ENCODE measurements at regions of chr10 and their contacts with region 1.

Region 1: DNA sequence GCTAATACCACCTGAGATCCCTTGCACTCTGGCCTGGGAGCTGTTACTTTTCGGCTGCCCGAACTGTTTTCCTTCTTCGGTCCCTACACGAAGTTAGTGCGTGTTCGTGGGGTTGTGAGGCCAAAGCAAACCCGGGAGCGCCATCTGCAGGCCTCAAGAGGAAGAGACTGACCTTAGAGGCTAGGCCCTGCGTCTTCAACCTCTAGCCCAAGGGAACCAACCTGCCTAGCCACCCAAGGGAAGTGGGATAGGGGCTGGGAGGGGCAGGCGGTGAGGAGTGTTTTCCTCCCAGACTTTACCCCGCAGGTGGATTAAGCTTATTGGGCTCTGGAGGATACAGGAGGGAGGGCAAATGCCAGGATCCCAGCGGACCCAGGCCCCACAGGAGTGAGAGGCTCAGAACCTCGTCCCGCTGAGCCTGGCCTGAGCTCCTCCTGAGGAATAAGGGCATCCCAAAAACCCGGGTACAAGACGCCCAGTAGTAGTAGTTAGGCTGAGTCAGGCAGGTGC is 1.7 kb upstream of the PAX2 start:
- DNase-seq: peak; percentile 17 to 63 (median 24)
- H3K4me3 ChIP-seq: no peak overlapping the region
- H3K4me3 Mint-ChIP-seq: peak overlapping the region in 1 of 2 donors; percentile 81
- H3K27ac ChIP-seq: no peak overlapping the region
- H3K27ac Mint-ChIP-seq: no peak overlapping the region
- H3K4me1 ChIP-seq: no peaks in the 10 kb centered on the region
- H3K4me1 Mint-ChIP-seq: peaks cover 7% of the 10 kb centered on the region
- H3K27me3 ChIP-seq: peaks cover 79 to 93% of the 10 kb centered on the region in 2 donors
- H3K27me3 Mint-ChIP-seq: peaks cover 90 to 99% (median 94%) of the 10 kb centered on the region in 3 donors
- CTCF ChIP-seq: peak; percentile 67

Region 2: DNA sequence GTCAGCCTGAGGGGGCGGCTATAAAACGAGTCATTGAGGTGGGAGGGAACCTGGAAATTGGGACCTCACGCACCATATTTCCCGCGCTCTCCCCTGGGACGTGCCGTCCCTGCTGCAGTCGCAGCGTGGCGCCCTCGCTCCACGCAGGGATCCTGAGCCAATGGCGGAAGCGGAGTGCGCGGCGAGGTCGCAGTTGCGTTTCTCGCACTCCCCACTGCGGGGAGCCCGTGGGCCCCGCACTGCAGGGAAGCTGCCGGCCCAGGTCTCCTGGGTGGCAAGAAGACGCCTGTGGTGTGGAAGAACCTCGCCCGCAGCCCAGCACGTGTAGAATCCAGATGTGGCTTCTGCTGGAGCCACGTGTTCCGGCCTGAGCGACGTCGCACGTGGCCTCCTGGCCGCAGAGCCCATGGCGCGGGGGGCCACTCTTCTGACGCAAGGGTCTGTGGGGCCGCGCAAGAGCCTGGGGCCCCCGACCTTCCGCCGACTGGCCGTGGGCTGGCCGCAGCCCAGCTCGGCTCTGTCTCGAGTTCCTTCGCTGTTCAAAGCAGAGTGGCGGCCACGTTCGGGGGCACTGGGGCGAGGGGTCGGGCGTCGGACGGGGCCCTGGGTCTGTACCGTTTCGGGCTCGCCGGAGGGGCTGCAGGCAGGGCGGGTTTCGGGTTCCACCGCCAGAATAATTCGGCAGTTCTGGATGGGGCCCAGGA is 181.5 kb before region 1 on chr10:
- intact Hi-C with region 1: loop called (anchors 2 to 10 kb)
- DNase-seq: peak; percentile 60 to 77 (median 64)
- H3K4me3 ChIP-seq: peak overlapping the region in 1 of 3 experiments; percentile 13
- H3K4me3 Mint-ChIP-seq: peak overlapping the region; percentile 17 to 79
- H3K27ac ChIP-seq: no peak overlapping the region
- H3K27ac Mint-ChIP-seq: no peak overlapping the region
- H3K4me1 ChIP-seq: peaks cover 12 to 16% of the 10 kb centered on the region in 2 donors
- H3K4me1 Mint-ChIP-seq: peaks cover 18% of the 10 kb centered on the region
- H3K27me3 ChIP-seq: peaks cover 12 to 48% of the 10 kb centered on the region in 2 donors
- H3K27me3 Mint-ChIP-seq: peaks cover 51 to 64% (median 59%) of the 10 kb centered on the region in 3 donors
- CTCF ChIP-seq: peak; percentile 83

Region 3: DNA sequence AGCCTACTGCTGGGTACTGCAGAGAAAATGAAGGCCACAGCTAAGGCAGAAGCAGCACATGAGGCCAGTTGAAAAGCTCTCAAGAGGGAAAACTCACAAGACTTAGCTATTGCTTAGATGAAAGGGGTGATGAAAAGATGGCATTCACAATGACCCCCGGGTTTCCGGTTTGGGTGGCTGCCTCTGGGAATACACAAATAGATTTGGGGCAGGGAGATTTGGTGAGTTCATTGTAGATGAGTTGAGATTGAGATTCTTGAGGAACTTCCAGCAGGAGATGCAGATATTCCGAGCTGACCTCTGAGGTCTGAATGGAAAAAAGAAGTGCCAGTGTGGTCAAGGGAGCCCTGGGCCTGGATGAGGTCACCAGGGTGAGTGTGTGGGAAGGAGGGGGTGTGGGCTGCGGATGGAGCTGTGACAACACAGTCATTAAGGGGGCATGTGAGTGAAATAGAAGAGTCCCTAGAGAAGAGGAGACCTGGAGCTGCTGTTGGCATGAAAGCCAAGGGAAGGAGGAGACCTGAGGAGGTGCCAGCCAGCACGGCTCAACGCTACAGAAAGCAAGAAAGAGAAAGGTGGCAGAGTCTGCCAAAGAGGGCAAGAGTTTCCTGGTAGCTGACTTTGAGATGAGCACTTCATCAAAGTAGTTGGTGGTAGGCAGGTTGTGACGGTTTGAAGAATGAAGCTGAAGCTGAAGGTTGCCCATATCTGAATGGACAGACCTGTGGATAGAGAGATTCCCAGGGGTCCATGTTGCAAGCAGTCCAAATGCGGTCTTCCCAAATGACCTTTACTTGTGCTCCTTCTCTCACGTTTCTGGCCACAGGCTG is 164.2 kb before region 1 on chr10:
- intact Hi-C with region 1: no loop called
- DNase-seq: no peak
- H3K4me3 ChIP-seq: no peak overlapping the region
- H3K4me3 Mint-ChIP-seq: no peak overlapping the region
- H3K27ac ChIP-seq: no peak overlapping the region
- H3K27ac Mint-ChIP-seq: no peak overlapping the region
- H3K4me1 ChIP-seq: no peaks in the 10 kb centered on the region
- H3K4me1 Mint-ChIP-seq: no peaks in the 10 kb centered on the region
- H3K27me3 ChIP-seq: peaks cover 7 to 8% of the 10 kb centered on the region in 2 donors
- H3K27me3 Mint-ChIP-seq: peaks cover 29 to 49% (median 37%) of the 10 kb centered on the region in 3 donors
- CTCF ChIP-seq: no peak

Region 4: GRCh38 chr10:100659361-100660098 is 84.2 kb before region 1 on chr10:
- intact Hi-C with region 1: loop called in 1 of 2 experiments (anchors 10 kb)
- DNase-seq: no peak
- H3K4me3 ChIP-seq: no peak overlapping the region
- H3K4me3 Mint-ChIP-seq: peak overlapping the region in 1 of 2 donors; percentile 75
- H3K27ac ChIP-seq: no peak overlapping the region
- H3K27ac Mint-ChIP-seq: no peak overlapping the region
- H3K4me1 ChIP-seq: peaks cover under 1 to 5% of the 10 kb centered on the region in 2 donors
- H3K4me1 Mint-ChIP-seq: peaks cover 12% of the 10 kb centered on the region
- H3K27me3 ChIP-seq: peaks cover 60 to 77% of the 10 kb centered on the region in 2 donors
- H3K27me3 Mint-ChIP-seq: peaks cover 71 to 91% (median 85%) of the 10 kb centered on the region in 3 donors
- CTCF ChIP-seq: no peak

Region 5: DNA sequence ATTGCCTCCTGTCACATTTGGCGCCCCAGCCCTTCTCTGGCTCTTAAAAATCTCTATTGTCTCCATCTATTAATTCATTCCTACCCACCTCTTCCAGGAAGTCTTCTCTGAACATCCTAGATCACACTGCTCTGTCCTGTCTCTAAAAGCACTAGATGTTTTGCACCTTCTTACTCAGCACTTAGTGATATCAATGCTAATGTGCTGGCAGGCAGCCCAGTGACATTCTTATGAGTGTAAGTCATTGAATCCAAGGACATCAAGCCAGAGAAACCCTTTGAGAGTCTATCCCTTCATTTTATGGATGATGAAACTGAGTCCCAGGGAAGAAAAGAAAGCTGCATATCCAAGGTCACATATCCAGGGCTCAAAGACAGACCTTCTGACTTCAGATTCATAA is 46.6 kb before region 1 on chr10:
- intact Hi-C with region 1: no loop called
- DNase-seq: no peak
- H3K4me3 ChIP-seq: no peak overlapping the region
- H3K4me3 Mint-ChIP-seq: no peak overlapping the region
- H3K27ac ChIP-seq: no peak overlapping the region
- H3K27ac Mint-ChIP-seq: no peak overlapping the region
- H3K4me1 ChIP-seq: peaks cover 5 to 7% of the 10 kb centered on the region in 2 donors
- H3K4me1 Mint-ChIP-seq: peaks cover 4% of the 10 kb centered on the region
- H3K27me3 ChIP-seq: peaks cover 18 to 23% of the 10 kb centered on the region in 2 donors
- H3K27me3 Mint-ChIP-seq: peaks cover 9 to 29% (median 27%) of the 10 kb centered on the region in 3 donors
- CTCF ChIP-seq: no peak

Region 6: GRCh38 chr10:100766693-100767421 is 23.2 kb after region 1 on chr10:
- intact Hi-C with region 1: no loop called
- DNase-seq: no peak
- H3K4me3 ChIP-seq: no peak overlapping the region
- H3K4me3 Mint-ChIP-seq: no peak overlapping the region
- H3K27ac ChIP-seq: no peak overlapping the region
- H3K27ac Mint-ChIP-seq: no peak overlapping the region
- H3K4me1 ChIP-seq: no peaks in the 10 kb centered on the region
- H3K4me1 Mint-ChIP-seq: no peaks in the 10 kb centered on the region
- H3K27me3 ChIP-seq: peaks cover 20 to 37% of the 10 kb centered on the region in 2 donors
- H3K27me3 Mint-ChIP-seq: peaks cover 20 to 55% (median 34%) of the 10 kb centered on the region in 3 donors
- CTCF ChIP-seq: no peak

Region 7: DNA sequence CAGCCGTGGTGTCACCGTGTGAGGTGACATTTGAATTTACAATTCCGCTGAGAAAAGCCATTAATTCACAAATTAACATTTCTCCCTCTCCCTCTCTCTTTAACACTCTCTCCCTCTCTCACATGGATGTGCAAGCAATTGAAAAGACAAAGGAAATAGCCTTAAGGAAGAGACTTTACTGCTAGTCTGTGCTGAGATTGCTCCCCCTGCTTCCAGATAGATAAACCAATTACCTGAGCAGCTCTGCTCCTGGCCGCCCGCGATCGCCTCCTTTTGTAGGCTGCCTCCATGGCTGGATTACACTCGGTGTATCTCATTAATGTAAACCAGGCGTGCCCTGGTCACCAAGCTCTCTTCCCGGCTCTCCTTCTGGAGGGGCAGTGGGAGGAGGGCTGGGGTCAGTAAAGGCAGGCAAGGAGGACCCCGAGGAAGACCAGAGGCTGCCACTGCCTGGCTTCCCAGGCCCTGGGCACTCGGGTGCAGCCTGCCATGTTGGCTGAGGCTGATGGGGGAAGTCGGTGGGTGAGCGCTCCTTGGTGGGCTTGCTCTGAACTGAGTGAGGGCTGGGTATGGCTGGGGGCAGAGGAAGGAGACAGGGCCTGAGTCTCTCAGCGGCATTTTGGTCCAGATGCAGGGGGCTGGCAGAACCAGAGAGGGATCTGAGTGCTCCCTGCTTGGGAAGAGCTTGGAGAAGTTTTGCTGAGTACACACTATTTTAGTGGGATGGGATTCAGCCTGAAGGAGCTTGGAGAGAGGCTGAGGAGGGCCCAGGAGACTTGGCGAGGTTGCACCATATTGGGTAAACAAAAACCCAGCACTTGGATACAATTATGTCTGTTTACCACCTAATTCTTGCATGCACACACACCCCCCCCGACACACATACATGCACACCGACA is 44.6 kb after region 1 on chr10:
- intact Hi-C with region 1: no loop called
- DNase-seq: no peak
- H3K4me3 ChIP-seq: no peak overlapping the region
- H3K4me3 Mint-ChIP-seq: peak overlapping the region in 1 of 2 donors; percentile 39
- H3K27ac ChIP-seq: no peak overlapping the region
- H3K27ac Mint-ChIP-seq: no peak overlapping the region
- H3K4me1 ChIP-seq: no peaks in the 10 kb centered on the region
- H3K4me1 Mint-ChIP-seq: no peaks in the 10 kb centered on the region
- H3K27me3 ChIP-seq: peaks cover 0 to 31% of the 10 kb centered on the region in 2 donors
- H3K27me3 Mint-ChIP-seq: peaks cover 27 to 50% (median 47%) of the 10 kb centered on the region in 3 donors
- CTCF ChIP-seq: no peak

Measured in CD14-positive monocyte (primary cell).